ENCODE measurements at regions of chr1 and their contacts with region 1.

Region 1: GRCh38 chr1:11907275-11908094 is 18.7 kb downstream of the KIAA2013 start:
- DNase-seq: peak; percentile 93
- H3K4me3 Mint-ChIP-seq: peak overlapping the region; percentile 81
- H3K27ac Mint-ChIP-seq: peak overlapping the region; percentile 98
- H3K4me1 Mint-ChIP-seq: peaks cover 46% of the 10 kb centered on the region
- H3K27me3 Mint-ChIP-seq: peaks cover 16% of the 10 kb centered on the region

Region 2: DNA sequence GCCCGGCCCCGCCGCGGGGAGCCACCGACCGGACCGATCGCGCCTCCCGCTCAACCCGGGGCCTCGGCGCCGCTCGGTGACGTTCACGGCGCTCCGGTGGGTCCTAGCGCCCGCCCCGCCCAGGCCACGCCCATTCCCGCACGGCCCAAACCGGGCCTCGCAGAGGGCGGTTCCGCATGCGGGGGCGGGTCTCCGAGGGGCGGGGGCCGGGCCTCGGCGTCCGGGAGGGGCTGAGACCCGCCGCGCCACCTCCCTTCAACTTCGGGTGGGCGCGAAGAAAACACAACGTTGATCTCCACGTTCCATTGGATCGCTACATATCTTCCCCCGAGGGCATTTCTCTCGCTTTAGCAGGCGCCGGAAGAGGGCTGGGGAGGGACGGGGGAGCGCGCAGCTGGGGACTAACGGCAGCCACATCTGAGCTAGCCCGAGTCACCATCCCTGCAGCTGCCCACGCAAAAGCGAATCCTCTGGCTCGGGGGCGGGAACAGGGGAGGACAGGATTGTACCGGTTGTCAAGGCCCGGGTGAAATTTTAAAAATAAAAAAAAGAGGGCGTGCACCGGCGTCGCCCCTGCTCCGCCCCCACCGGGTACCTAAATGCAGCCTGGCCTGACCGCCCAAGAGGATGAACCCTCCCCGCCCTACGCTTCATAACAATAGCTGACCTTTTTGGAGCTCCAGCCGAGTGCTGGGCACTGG is 226.3 kb before region 1 on chr1 and contains the start of gene MAD2L2:
- CTCF ChIA-PET with region 1: no interaction called
- POLR2A ChIA-PET with region 1: interaction called, 18 read pairs
- DNase-seq: peak; percentile 91
- H3K4me3 Mint-ChIP-seq: peak within 1 kb of the TSS; percentile 83
- H3K27ac Mint-ChIP-seq: peak within 1 kb of the TSS; percentile 89
- H3K4me1 Mint-ChIP-seq: peaks cover 16% of the 10 kb centered on the region
- H3K27me3 Mint-ChIP-seq: peaks cover 15% of the 10 kb centered on the region
- total RNA-seq, gene MAD2L2: 59.2 to 63.1 TPM

Region 3: GRCh38 chr1:11882814-11883538 is 24.5 kb before region 1 on chr1:
- CTCF ChIA-PET with region 1: no interaction called
- POLR2A ChIA-PET with region 1: interaction called, 26 read pairs
- DNase-seq: no peak
- H3K4me3 Mint-ChIP-seq: no peak overlapping the region
- H3K27ac Mint-ChIP-seq: no peak overlapping the region
- H3K4me1 Mint-ChIP-seq: no peaks in the 10 kb centered on the region
- H3K27me3 Mint-ChIP-seq: peaks cover 2% of the 10 kb centered on the region

Region 4: DNA sequence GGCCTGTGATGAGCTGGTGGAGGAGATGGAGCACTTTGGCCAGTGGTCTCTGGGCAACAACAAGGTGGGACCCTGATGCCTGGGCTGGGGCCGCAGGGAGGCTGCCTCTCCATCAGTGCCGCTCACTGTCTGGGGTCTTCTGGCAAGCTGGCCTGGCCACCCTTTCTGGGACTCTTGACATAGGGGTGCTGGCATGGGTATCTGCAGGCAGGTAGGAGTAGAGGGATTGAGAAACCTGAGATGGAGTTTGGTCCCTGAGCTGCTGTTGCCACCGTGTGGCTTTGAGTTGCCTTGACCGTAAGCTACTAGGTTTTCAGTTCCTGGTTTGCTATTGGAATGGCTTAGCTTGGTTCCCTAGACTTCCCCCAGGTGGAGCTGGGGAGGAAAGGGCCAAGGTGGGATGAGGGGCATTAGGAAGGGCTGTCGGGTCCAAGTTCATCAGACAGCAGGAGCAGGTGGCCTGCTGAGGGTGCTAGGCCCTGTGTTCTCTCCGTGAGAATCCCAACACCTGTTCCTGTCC is 59.6 kb after region 1 on chr1:
- CTCF ChIA-PET with region 1: interaction called, 11 read pairs
- POLR2A ChIA-PET with region 1: interaction called, 223 read pairs
- DNase-seq: peak; percentile 29
- H3K4me3 Mint-ChIP-seq: no peak overlapping the region
- H3K27ac Mint-ChIP-seq: no peak overlapping the region
- H3K4me1 Mint-ChIP-seq: peaks cover 5% of the 10 kb centered on the region
- H3K27me3 Mint-ChIP-seq: no peaks in the 10 kb centered on the region

Region 5: DNA sequence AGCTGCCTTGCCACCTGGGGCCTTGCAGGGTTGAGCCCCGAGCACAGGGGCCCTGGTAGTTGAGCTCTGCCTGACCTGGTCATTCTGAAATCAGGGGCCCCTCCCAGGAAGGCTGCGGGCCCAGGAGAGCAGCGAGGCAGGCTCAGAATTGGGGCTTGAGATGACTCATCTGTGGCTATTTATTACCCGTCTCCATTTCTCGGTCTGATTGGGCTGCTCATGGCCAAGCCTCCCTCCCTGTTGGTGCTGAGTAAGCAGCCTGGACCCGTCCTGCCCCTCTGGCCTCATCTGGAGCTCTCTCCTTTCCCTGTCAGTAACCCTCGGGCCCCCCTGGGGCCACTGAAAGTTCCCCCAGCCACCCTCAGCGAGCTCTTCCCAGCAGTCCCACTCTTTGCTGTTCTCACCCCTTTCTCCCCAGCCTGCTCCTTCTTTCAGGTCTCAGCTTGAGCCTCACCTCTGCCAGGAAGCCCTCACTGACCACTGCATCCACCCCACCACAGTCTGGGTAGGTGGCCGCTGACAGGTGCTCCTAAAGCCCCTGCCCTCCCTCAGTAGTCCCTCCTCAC is 144.6 kb after region 1 on chr1:
- CTCF ChIA-PET with region 1: no interaction called
- POLR2A ChIA-PET with region 1: interaction called, 124 read pairs
- DNase-seq: peak; percentile 76
- H3K4me3 Mint-ChIP-seq: peak overlapping the region; percentile 32
- H3K27ac Mint-ChIP-seq: peak overlapping the region; percentile 78
- H3K4me1 Mint-ChIP-seq: peaks cover 62% of the 10 kb centered on the region
- H3K27me3 Mint-ChIP-seq: no peaks in the 10 kb centered on the region

Region 6: GRCh38 chr1:12161662-12162458 is 254.4 kb after region 1 on chr1:
- CTCF ChIA-PET with region 1: no interaction called
- POLR2A ChIA-PET with region 1: interaction called, 12 read pairs
- DNase-seq: peak; percentile 90
- H3K4me3 Mint-ChIP-seq: peak overlapping the region; percentile 49
- H3K27ac Mint-ChIP-seq: peak overlapping the region; percentile 98
- H3K4me1 Mint-ChIP-seq: peaks cover 86% of the 10 kb centered on the region
- H3K27me3 Mint-ChIP-seq: no peaks in the 10 kb centered on the region

Region 7: DNA sequence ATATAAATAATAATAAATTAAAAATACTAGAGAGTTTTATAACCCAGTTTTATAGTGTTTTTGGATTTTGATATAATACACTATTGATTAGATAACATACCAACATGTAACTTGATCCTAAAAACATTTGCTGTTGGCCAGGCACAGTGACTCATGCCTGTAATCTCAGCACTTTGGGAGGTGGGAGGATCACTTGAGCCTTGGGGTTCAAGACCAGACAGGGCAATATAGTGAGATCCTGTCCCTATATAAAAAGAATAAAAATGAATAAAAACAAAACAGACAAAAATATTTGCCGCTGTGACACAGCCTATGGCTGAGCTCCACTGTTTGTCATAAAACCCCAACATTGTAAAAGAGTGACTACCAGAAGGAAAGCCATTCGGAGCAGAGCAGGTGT is 348.4 kb after region 1 on chr1:
- CTCF ChIA-PET with region 1: no interaction called
- POLR2A ChIA-PET with region 1: no interaction called
- DNase-seq: no peak
- H3K4me3 Mint-ChIP-seq: no peak overlapping the region
- H3K27ac Mint-ChIP-seq: no peak overlapping the region
- H3K4me1 Mint-ChIP-seq: no peaks in the 10 kb centered on the region
- H3K27me3 Mint-ChIP-seq: no peaks in the 10 kb centered on the region

Measured in activated CD4-positive, alpha-beta memory T cell treated with anti-CD3 and anti-CD28 coated beads, Interleukin-2, amount 10 ng/mL, durations not matched to agents 7 days and 5 days (primary cell).